ENCODE measurements at regions of chr9 and their contacts with region 1.

Region 1: GRCh38 chr9:136629752-136630661 is 32.7 kb upstream of the EGFL7 start:
- DNase-seq: peak; percentile 66 to 75 (median 70)
- ATAC-seq: peak; percentile 33
- H3K4me3 ChIP-seq: no peak overlapping the region
- H3K27ac ChIP-seq: no peak overlapping the region
- H3K4me1 ChIP-seq: peaks cover 54% of the 10 kb centered on the region
- H3K27me3 ChIP-seq: no peaks in the 10 kb centered on the region
- CTCF ChIP-seq: peak; percentile 43 to 77 (median 65)
- POLR2A ChIP-seq: no peak

Region 2: GRCh38 chr9:136489731-136490130 is 140.3 kb before region 1 on chr9:
- intact Hi-C with region 1: loop called (anchors 2 kb)
- DNase-seq: no peak
- ATAC-seq: no peak
- H3K4me3 ChIP-seq: no peak overlapping the region
- H3K27ac ChIP-seq: no peak overlapping the region
- H3K4me1 ChIP-seq: peaks cover 18% of the 10 kb centered on the region
- H3K27me3 ChIP-seq: no peaks in the 10 kb centered on the region
- CTCF ChIP-seq: no peak
- POLR2A ChIP-seq: no peak

Region 3: DNA sequence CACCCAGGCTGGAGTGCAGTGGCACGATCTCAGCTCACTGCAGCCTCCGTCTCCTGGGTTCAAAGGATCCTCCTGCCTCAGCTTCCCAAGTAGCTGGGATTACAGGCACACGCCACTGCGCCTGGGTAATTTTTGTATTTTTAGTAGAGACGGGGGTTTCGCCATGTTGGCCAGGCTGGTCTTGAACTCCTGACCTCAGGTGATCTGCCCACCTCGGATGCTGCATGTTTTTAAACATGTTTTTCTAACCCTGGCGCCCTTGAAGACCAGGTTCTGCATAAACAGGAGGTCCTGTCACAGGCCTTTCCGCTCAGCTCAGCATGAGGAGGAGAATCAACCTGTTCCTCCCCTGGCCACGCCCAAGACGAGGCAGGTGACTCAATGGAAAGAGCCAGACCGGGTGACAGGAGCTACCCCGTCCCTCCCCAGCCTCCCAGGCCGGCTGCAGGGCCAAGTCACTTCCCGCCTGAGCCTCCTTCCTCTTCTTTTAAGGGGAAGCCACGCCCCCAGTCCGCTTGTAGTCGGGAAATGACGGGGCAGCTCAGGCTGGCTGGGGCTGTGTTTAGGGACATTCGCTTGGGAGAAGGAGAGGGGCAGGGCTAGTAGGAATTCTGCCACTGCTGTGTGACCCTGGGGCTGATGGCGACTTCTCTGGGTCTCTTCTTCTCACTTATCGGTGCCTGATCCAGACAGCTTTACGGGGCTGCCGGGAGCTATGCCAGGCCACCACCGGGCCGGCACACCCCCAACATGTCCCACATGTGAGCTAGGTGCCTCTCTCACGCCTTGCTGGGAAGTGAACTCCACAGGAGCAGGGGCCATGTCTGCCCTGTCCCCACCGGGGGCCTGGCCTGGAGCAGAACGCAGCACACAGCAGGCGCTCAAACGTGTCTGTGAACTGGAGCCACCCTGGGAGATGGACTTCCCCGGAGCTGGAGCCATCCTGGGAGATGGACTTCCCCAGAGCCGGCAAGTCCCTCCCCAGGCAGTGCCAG is 90.3 kb before region 1 on chr9:
- intact Hi-C with region 1: loop called (anchors 5 kb)
- DNase-seq: peak; percentile 81 to 94 (median 89)
- ATAC-seq: peak; percentile 62
- H3K4me3 ChIP-seq: no peak overlapping the region
- H3K27ac ChIP-seq: peak overlapping the region; percentile 57 to 75 (median 70)
- H3K4me1 ChIP-seq: peaks cover 76% of the 10 kb centered on the region
- H3K27me3 ChIP-seq: no peaks in the 10 kb centered on the region
- CTCF ChIP-seq: no peak
- POLR2A ChIP-seq: peak in 2 of 3 donors; percentile 24 to 54

Region 4: DNA sequence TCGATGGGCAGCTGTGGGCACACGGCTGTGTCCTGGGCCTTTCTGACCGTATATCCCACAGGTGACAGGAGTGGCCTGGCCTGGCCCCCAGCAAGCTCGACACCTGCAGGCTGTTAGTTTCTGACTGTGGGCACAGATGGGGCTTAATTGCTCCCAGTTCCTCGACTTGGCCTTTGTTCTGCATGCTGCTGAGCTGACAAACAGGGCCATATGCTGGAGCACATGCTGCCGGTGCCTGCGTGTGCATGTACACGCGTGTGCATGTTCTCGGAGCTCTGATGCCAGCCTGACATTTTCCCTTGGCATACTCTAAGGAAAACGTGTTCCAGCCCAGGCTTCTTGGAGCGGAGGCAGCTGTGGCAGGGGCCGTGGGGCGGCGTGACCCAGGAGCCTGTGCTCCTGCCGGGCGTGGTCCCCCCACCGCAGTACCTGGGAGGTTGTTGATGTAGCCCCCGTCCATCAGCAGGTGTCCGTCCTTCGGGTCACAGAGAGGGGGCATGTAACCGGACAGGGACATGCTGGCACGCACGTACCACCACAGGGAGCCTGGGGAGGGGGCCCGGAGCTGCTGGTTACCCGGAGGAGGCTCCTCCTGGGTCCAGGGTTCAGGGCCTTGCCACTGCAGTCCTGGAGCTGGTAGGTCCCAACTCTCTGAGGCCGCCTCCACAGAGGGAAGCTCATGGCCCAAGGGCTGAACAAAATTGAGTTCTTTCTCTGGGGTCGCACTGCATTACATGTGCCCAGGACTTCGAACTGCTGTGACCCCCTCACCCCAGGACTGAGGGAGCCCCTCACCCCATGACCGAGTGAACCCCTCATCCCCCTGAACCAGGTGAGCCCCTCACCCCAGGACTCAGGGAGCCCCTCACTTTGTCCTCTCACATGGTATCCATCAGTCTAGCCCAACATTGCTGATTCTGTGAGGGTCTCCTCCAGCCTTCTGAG is 833.3 kb after region 1 on chr9:
- intact Hi-C with region 1: no loop called
- DNase-seq: no peak
- ATAC-seq: no peak
- H3K4me3 ChIP-seq: no peak overlapping the region
- H3K27ac ChIP-seq: no peak overlapping the region
- H3K4me1 ChIP-seq: peaks cover 15% of the 10 kb centered on the region
- H3K27me3 ChIP-seq: no peaks in the 10 kb centered on the region
- CTCF ChIP-seq: no peak
- POLR2A ChIP-seq: no peak

Measured in body of pancreas (tissue), 4 donors.